ENCODE measurements at regions of chr5 and their contacts with region 1.

Region 1: DNA sequence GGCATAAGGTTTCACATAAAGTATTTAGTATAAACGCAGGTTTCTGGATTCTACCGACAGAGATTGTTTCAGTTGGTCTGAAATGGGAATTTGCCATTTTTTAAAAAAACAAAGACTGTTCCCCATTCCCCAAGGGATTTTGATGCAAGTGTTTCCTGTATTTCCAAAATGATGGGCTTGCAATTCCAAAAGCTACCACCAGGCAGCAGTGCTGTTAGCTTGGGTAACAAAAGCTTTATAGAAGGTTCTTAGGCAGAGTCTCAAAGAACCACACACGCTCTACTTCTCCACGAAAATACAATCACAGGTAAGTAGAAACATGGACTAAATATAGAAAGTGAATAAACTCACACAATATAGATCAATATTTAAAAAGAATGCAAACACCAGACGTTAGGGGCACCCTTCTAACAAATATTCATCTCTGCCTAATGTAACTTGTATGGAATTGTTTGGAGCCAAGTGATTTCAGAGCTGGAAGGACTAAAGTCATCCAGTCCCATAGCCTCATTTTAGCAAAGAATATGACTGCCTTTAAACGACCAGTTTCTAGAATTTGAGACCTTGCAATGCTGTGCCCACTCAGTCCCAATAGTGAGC is 154.3 kb downstream of the SPOCK1 start:
- DNase-seq: peak; percentile 70
- H3K4me3 ChIP-seq: no peak overlapping the region
- H3K27ac ChIP-seq: no peak overlapping the region
- H3K4me1 ChIP-seq: peaks cover 0 to 13% (median 9%) of the 10 kb centered on the region in 4 donors
- H3K27me3 ChIP-seq: no peaks in the 10 kb centered on the region
- CTCF ChIP-seq: peak; percentile 63 to 89 (median 82)
- EP300 ChIP-seq: no peak
- POLR2A ChIP-seq: no peak

Region 2: GRCh38 chr5:136927571-136927970 is 417.3 kb before region 1 on chr5:
- intact Hi-C with region 1: no loop called
- DNase-seq: no peak
- H3K4me3 ChIP-seq: no peak overlapping the region
- H3K27ac ChIP-seq: no peak overlapping the region
- H3K4me1 ChIP-seq: no peaks in the 10 kb centered on the region
- H3K27me3 ChIP-seq: no peaks in the 10 kb centered on the region
- CTCF ChIP-seq: no peak
- EP300 ChIP-seq: no peak
- POLR2A ChIP-seq: no peak

Region 3: GRCh38 chr5:137310051-137310730 is 34.6 kb before region 1 on chr5:
- intact Hi-C with region 1: no loop called
- DNase-seq: no peak
- H3K4me3 ChIP-seq: no peak overlapping the region
- H3K27ac ChIP-seq: peak overlapping the region in 1 of 4 donors; percentile 2
- H3K4me1 ChIP-seq: peaks cover 0 to 28% (median 21%) of the 10 kb centered on the region in 4 donors
- H3K27me3 ChIP-seq: no peaks in the 10 kb centered on the region
- CTCF ChIP-seq: no peak
- EP300 ChIP-seq: no peak
- POLR2A ChIP-seq: no peak

Region 4: GRCh38 chr5:137320056-137321045 is 24.5 kb before region 1 on chr5:
- intact Hi-C with region 1: loop called (anchors 2 kb)
- DNase-seq: no peak
- H3K4me3 ChIP-seq: no peak overlapping the region
- H3K27ac ChIP-seq: peak overlapping the region in 1 of 4 donors; percentile 8
- H3K4me1 ChIP-seq: peaks cover 0 to 28% (median 14%) of the 10 kb centered on the region in 4 donors
- H3K27me3 ChIP-seq: no peaks in the 10 kb centered on the region
- CTCF ChIP-seq: peak; percentile 57 to 82 (median 76)
- EP300 ChIP-seq: no peak
- POLR2A ChIP-seq: no peak

Measured in sigmoid colon (tissue), 7 donors.